ENCODE measurements at regions of chr6 and their contacts with region 1.

Region 1: GRCh38 chr6:143037470-143037869 is 23.2 kb upstream of the AIG1 start:
- DNase-seq: no peak
- H3K4me3 ChIP-seq: no peak overlapping the region
- H3K27ac ChIP-seq: no peak overlapping the region
- H3K27me3 ChIP-seq: no peaks in the 10 kb centered on the region
- CTCF ChIP-seq: no peak

Region 2: DNA sequence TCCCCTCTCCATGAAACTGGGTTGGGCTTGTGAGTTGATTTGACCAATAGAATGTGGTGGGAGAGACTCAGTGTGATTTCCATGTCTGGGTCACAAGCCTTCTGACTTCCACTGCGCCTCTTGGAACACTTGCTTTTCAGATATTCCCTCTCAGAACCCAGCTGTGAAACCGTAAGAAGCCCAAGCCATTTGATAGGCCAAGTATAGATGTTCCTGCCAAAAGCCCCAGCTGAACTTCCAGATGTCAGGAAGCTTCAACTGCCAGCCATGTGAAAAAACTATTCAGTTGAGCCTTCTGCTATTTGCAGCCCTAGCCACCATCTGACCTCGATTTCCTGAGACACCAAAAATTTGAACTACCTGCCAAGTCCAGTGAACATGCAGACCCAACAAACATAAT is 1292.5 kb before region 1 on chr6:
- intact Hi-C with region 1: no loop called
- DNase-seq: no peak
- H3K4me3 ChIP-seq: no peak overlapping the region
- H3K27ac ChIP-seq: no peak overlapping the region
- H3K27me3 ChIP-seq: no peaks in the 10 kb centered on the region
- CTCF ChIP-seq: no peak

Region 3: DNA sequence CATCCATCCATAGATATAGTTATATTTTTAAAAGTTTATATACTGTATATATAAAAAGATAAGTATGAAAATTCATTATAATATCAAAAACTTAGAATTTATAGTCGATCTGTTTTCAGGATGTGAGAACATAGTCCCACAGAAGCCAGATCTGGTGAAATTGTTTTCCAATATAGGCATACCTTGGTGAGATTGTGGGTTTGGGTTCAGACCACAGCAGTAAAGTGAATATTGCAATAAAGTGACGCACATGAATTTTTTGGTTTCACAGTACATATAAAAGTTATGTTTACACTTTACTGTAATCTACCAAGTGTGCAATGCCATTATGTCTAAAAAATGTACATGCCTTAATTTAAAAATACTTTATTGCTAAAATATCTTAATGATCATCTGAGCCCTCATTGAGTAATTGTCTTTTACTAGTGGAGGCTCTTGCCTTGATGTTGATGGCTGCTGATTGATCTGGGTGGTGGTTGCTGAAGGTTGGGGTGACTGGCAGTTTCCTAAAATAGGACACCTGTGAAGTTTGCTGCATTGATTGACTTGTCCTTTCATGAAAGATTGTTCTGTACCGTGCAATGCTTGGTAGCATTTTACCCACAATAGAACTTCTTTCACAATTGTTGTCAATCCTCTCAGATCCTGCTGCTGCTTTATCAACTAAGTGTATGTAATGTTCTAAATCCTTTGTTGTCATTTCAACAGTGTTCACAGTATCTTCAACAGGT is 53.0 kb after region 1 on chr6:
- intact Hi-C with region 1: loop called in 1 of 2 experiments (anchors 2 kb)
- DNase-seq: no peak
- H3K4me3 ChIP-seq: peak overlapping the region in 3 of 59 donors; percentile 0 to 10 (median 1)
- H3K27ac ChIP-seq: peak overlapping the region in 3 of 59 donors; percentile 24 to 38 (median 28)
- H3K27me3 ChIP-seq: no peaks in the 10 kb centered on the region
- CTCF ChIP-seq: no peak

Region 4: GRCh38 chr6:143125864-143126573 is 88.5 kb after region 1 on chr6:
- intact Hi-C with region 1: no loop called
- DNase-seq: no peak
- H3K4me3 ChIP-seq: no peak overlapping the region
- H3K27ac ChIP-seq: no peak overlapping the region
- H3K27me3 ChIP-seq: no peaks in the 10 kb centered on the region
- CTCF ChIP-seq: no peak

Region 5: DNA sequence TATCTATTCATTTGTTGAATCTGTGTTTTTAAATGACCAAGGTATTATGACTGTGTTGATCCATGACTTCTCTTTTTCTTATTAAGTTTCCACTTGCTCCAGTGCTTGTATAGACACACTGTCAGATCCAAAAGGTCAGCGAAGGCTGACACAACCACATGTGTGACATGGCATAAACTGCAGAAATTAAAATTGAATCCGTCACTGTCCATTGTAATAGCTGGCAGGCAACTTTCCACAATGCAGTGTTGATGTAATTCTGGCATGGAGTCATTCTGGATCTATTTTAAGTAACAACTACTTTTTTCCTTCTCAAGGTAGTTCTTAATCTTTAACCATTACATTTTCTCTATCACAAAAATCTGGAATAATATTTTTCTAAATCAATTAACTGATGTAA is 168.5 kb after region 1 on chr6:
- intact Hi-C with region 1: no loop called
- DNase-seq: no peak
- H3K4me3 ChIP-seq: no peak overlapping the region
- H3K27ac ChIP-seq: no peak overlapping the region
- H3K27me3 ChIP-seq: no peaks in the 10 kb centered on the region
- CTCF ChIP-seq: no peak